ENCODE measurements at regions of chr5 and their contacts with region 1.

Region 1: GRCh38 chr5:44332285-44332971 is 56.8 kb downstream of the FGF10 start:
- DNase-seq: no peak
- H3K4me3 ChIP-seq: no peak overlapping the region
- H3K27me3 ChIP-seq: no peaks in the 10 kb centered on the region
- CTCF ChIP-seq: peak; percentile 60

Region 2: DNA sequence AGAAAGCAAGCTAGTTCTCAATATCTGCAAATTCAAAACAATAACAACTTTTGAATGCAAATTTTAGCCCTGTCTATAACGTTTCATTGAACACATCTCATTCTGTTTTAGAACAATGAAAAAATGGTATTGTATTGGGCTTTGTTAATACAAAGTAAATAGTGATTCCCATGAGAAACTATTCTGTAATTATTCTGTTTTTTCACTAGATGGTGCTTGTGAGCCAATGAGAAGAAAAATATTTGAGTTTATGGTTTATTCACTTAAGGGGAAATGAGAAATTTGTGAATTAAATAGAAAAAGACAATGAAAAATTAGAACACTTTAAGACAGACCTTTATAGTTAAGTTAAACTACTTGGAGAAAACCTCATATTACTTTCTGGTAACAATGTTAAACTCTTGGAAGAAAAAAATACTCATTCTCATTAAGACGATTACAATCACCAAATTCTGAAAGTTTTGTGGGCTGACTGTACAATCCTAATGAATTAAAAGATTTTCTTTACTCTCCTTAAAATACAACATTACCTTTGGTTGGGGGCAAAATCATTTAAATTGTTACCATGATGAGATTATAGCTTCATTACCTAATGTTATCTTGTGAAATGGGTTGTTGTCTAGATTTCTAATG is 602.5 kb before region 1 on chr5:
- CTCF ChIA-PET with region 1: interaction called, 25 read pairs
- POLR2A ChIA-PET with region 1: no interaction called
- DNase-seq: peak; percentile 17
- H3K4me3 ChIP-seq: no peak overlapping the region
- H3K27me3 ChIP-seq: no peaks in the 10 kb centered on the region
- CTCF ChIP-seq: peak; percentile 41

Region 3: GRCh38 chr5:44189255-44189654 is 143.2 kb before region 1 on chr5:
- CTCF ChIA-PET with region 1: no interaction called
- POLR2A ChIA-PET with region 1: no interaction called
- DNase-seq: no peak
- H3K4me3 ChIP-seq: no peak overlapping the region
- H3K27me3 ChIP-seq: no peaks in the 10 kb centered on the region
- CTCF ChIP-seq: no peak

Region 4: DNA sequence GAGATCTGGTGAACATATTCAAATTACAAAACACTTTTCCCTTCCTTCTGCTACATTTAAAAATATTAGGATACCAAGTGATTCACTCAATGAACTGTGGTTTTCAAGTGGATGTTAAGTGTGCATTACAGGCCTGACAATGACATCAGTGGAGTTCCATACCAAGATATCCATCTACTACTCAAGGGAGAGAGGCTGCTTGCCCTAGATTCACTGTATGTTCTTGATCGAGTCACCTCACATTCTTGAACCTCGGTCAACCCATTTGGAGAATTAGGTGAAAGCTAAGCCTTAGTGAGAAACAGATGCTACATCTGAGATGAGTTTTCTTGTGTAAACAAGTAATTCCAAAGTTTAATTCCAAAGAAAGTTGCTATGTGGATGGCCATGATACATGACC is 85.4 kb before region 1 on chr5:
- CTCF ChIA-PET with region 1: no interaction called
- POLR2A ChIA-PET with region 1: no interaction called
- DNase-seq: peak; percentile 31
- H3K4me3 ChIP-seq: no peak overlapping the region
- H3K27me3 ChIP-seq: no peaks in the 10 kb centered on the region
- CTCF ChIP-seq: no peak

Measured in BJ (cell line).